PC-9 (cell line): ENCODE measurements at regions of chr4 and their contacts with region 1.

Region 1: GRCh38 chr4:156968479-156968984 is 3.1 kb downstream of the PDGFC start:
- DNase-seq: peak; percentile 38 to 57
- H3K4me3 ChIP-seq: peak overlapping the region; percentile 14; the same call in 1 of the 2 replicates
- H3K27ac ChIP-seq: no peak overlapping the region
- H3K4me1 ChIP-seq: peaks cover 14% of the 10 kb centered on the region
- H3K27me3 ChIP-seq: no peaks in the 10 kb centered on the region
- CTCF ChIP-seq: peak; percentile 82

Region 2: GRCh38 chr4:156294577-156294976 is 674.0 kb before region 1 on chr4:
- CTCF ChIA-PET with region 1: no interaction called
- POLR2A ChIA-PET with region 1: no interaction called
- intact Hi-C with region 1: loop called (anchors 1 kb)
- DNase-seq: peak; percentile 37 to 44
- H3K4me3 ChIP-seq: no peak overlapping the region
- H3K27ac ChIP-seq: no peak overlapping the region
- H3K4me1 ChIP-seq: no peaks in the 10 kb centered on the region
- H3K27me3 ChIP-seq: no peaks in the 10 kb centered on the region
- CTCF ChIP-seq: no peak

Region 3: GRCh38 chr4:156771171-156771837 is 197.2 kb before region 1 on chr4:
- CTCF ChIA-PET with region 1: no interaction called
- POLR2A ChIA-PET with region 1: no interaction called
- intact Hi-C with region 1: loop called (anchors 5 kb)
- DNase-seq: peak in 1 of 2 experiments; percentile 58
- H3K4me3 ChIP-seq: no peak overlapping the region
- H3K27ac ChIP-seq: no peak overlapping the region
- H3K4me1 ChIP-seq: no peaks in the 10 kb centered on the region
- H3K27me3 ChIP-seq: no peaks in the 10 kb centered on the region
- CTCF ChIP-seq: no peak

Region 4: GRCh38 chr4:156939801-156940200 is 28.7 kb before region 1 on chr4:
- CTCF ChIA-PET with region 1: no interaction called
- POLR2A ChIA-PET with region 1: no interaction called
- intact Hi-C with region 1: no loop called
- DNase-seq: no peak
- H3K4me3 ChIP-seq: no peak overlapping the region
- H3K27ac ChIP-seq: no peak overlapping the region
- H3K4me1 ChIP-seq: no peaks in the 10 kb centered on the region
- H3K27me3 ChIP-seq: no peaks in the 10 kb centered on the region
- CTCF ChIP-seq: no peak

Region 5: DNA sequence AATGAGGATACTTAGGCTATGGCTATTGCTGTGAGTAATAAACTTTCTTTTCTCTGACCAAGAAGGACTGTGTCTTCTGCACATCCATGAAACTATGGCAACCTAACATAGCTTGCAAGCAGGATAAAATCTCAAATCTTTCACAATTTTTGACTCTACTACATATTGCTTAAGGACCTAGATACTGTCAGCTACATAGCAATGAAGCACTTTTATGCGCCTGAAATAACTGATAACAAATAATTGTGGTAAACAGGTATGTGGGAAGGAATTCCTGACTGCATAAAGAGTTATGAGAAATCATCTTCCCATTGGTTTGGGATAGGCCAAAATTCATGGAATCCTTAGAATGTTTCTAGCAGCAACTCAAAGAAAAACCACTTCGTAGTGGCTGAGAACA is 44.2 kb after region 1 on chr4:
- CTCF ChIA-PET with region 1: no interaction called
- POLR2A ChIA-PET with region 1: interaction called, 3 read pairs
- intact Hi-C with region 1: loop called (anchors 2 kb)
- DNase-seq: peak; percentile 20 to 61
- H3K4me3 ChIP-seq: no peak overlapping the region
- H3K27ac ChIP-seq: no peak overlapping the region
- H3K4me1 ChIP-seq: no peaks in the 10 kb centered on the region; the same call in 1 of the 2 replicates
- H3K27me3 ChIP-seq: no peaks in the 10 kb centered on the region
- CTCF ChIP-seq: no peak

Region 6: GRCh38 chr4:157655096-157655809 is 686.7 kb after region 1 on chr4:
- CTCF ChIA-PET with region 1: no interaction called
- POLR2A ChIA-PET with region 1: interaction called, 10 read pairs
- intact Hi-C with region 1: no loop called
- DNase-seq: no peak
- H3K4me3 ChIP-seq: no peak overlapping the region
- H3K27ac ChIP-seq: no peak overlapping the region
- H3K4me1 ChIP-seq: no peaks in the 10 kb centered on the region
- H3K27me3 ChIP-seq: no peaks in the 10 kb centered on the region
- CTCF ChIP-seq: no peak

Region 7: GRCh38 chr4:158571736-158572135 is 1603.2 kb after region 1 on chr4:
- CTCF ChIA-PET with region 1: no interaction called
- POLR2A ChIA-PET with region 1: no interaction called
- intact Hi-C with region 1: no loop called
- DNase-seq: no peak
- H3K4me3 ChIP-seq: no peak overlapping the region
- H3K27ac ChIP-seq: no peak overlapping the region
- H3K4me1 ChIP-seq: no peaks in the 10 kb centered on the region
- H3K27me3 ChIP-seq: no peaks in the 10 kb centered on the region
- CTCF ChIP-seq: no peak